ENCODE measurements at regions of chr15 and their contacts with region 1.

Region 1: GRCh38 chr15:51162865-51163762 is 68.4 kb upstream of the TNFAIP8L3 start:
- DNase-seq: peak; percentile 55 to 74
- ATAC-seq: peak; percentile 82 to 96 (median 93)
- H3K4me3 ChIP-seq: peak overlapping the region in 6 of 10 donors; percentile 7 to 30 (median 18)
- H3K27ac ChIP-seq: peak overlapping the region in 8 of 10 donors; percentile 23 to 67 (median 62)
- H3K4me1 ChIP-seq: peaks cover 0 to 19% (median 8%) of the 10 kb centered on the region in 9 donors
- H3K27me3 ChIP-seq: no peaks in the 10 kb centered on the region
- CTCF ChIP-seq: peak; percentile 94 to 97 (median 96)

Region 2: DNA sequence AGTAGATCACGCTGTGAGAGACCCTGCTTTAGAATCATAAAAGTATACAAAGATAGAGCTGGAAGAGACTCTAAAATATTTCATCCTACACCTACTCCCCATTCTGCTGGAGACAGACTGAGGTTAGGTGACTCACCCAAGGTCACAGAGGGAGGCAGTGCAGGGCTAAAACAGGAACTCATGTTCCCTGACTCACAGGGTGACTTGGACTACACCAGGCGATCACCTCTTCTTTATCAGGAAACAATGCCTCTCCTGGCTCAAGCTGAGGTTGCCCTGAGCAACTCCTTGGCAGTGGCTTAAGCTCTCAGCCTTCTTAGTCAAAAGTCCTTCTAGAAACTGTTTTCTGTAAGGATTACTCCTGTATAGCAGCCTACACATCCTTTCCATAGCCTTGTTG is 42.0 kb before region 1 on chr15:
- intact Hi-C with region 1: no loop called
- DNase-seq: no peak
- ATAC-seq: peak in 4 of 8 donors; percentile 58 to 97 (median 74)
- H3K4me3 ChIP-seq: no peak overlapping the region
- H3K27ac ChIP-seq: no peak overlapping the region
- H3K4me1 ChIP-seq: peaks cover 0 to 12% (median 0%) of the 10 kb centered on the region in 9 donors
- H3K27me3 ChIP-seq: no peaks in the 10 kb centered on the region
- CTCF ChIP-seq: no peak

Region 3: GRCh38 chr15:51192521-51193280 is 29.6 kb after region 1 on chr15:
- intact Hi-C with region 1: loop called (anchors 1 to 2 kb)
- DNase-seq: peak; percentile 88 to 90
- ATAC-seq: peak; percentile 73 to 88 (median 80)
- H3K4me3 ChIP-seq: no peak overlapping the region
- H3K27ac ChIP-seq: peak overlapping the region in 2 of 10 donors; percentile 16 to 59
- H3K4me1 ChIP-seq: peaks cover 3 to 54% (median 24%) of the 10 kb centered on the region in 9 donors
- H3K27me3 ChIP-seq: peaks cover 0 to 15% (median 0%) of the 10 kb centered on the region in 7 donors
- CTCF ChIP-seq: peak; percentile 88 to 98 (median 96)

Region 4: GRCh38 chr15:51270706-51271105 is 107.6 kb after region 1 on chr15:
- intact Hi-C with region 1: loop called in 1 of 10 experiments (anchors 10 kb)
- DNase-seq: no peak
- ATAC-seq: peak in 2 of 8 donors; percentile 33 to 50
- H3K4me3 ChIP-seq: no peak overlapping the region
- H3K27ac ChIP-seq: no peak overlapping the region
- H3K4me1 ChIP-seq: peaks cover 0 to 25% (median 12%) of the 10 kb centered on the region in 9 donors
- H3K27me3 ChIP-seq: peaks cover 0 to 62% (median 32%) of the 10 kb centered on the region in 7 donors
- CTCF ChIP-seq: no peak

Region 5: GRCh38 chr15:51281368-51281967 is 118.4 kb after region 1 on chr15:
- intact Hi-C with region 1: loop called in 2 of 10 experiments (anchors 10 kb)
- DNase-seq: peak; percentile 63 to 64
- ATAC-seq: peak; percentile 84 to 95 (median 92)
- H3K4me3 ChIP-seq: no peak overlapping the region
- H3K27ac ChIP-seq: peak overlapping the region in 5 of 10 donors; percentile 6 to 42 (median 26)
- H3K4me1 ChIP-seq: peaks cover 0 to 26% (median 0%) of the 10 kb centered on the region in 9 donors
- H3K27me3 ChIP-seq: peaks cover 0 to 18% (median 7%) of the 10 kb centered on the region in 7 donors
- CTCF ChIP-seq: peak; percentile 63 to 83 (median 78)

Region 6: GRCh38 chr15:51401872-51402517 is 238.9 kb after region 1 on chr15:
- intact Hi-C with region 1: loop called in 2 of 10 experiments (anchors 2 to 5 kb)
- DNase-seq: peak; percentile 27 to 34
- ATAC-seq: peak in 5 of 8 donors; percentile 46 to 59 (median 47)
- H3K4me3 ChIP-seq: no peak overlapping the region
- H3K27ac ChIP-seq: no peak overlapping the region
- H3K4me1 ChIP-seq: peaks cover 0 to 6% (median 0%) of the 10 kb centered on the region in 9 donors
- H3K27me3 ChIP-seq: peaks cover 0 to 3% (median 0%) of the 10 kb centered on the region in 7 donors
- CTCF ChIP-seq: peak in 8 of 9 donors; percentile 34 to 72 (median 54)

Measured in heart right ventricle (tissue), 16 donors.